CD4-positive, alpha-beta memory T cell (primary cell): ENCODE measurements at regions of chr13 and their contacts with region 1.

Region 1: DNA sequence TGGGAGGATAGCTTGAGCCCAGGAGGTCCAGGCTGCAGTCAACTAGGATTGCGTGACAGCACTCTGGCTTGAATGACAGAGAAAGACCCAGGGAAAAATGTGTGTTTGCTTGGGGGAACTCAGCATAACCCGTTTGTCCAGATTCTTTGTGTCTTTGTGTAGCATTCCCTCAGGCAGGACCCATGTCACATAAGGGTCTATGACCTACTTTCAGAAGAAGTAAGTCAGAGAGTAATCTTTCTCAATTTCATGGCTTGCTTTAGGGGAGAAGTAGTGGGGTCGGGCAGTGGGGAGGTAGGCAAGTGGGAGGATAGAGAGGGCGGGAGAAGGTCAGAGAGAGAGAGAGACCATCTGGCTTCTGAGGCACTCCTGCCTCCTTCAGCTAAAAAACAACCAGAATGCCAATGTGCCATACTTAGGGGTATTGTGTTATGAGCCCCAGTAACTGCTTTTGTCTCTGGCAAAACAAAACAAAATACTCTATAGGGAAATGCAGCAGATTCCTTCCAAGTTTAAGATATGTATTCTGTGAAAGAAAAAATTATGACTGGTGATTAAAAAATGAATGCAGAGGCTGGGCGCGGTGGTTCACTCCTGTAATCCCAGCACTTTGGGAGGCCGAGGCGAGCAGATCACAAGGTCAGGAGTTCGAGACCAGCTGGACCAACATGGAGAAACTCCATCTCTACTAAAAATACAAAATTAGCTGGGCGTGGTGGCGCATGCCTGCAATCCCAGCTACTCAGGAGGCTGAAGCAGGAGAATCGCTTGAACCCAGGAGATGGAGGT is 12.1 kb upstream of the PSPC1 start:
- DNase-seq: no peak
- H3K4me3 ChIP-seq: no peak overlapping the region
- H3K4me3 Mint-ChIP-seq: no peak overlapping the region
- H3K27ac ChIP-seq: no peak overlapping the region
- H3K27ac Mint-ChIP-seq: peak overlapping the region in 1 of 7 donors; percentile 18
- H3K4me1 ChIP-seq: no peaks in the 10 kb centered on the region
- H3K4me1 Mint-ChIP-seq: no peaks in the 10 kb centered on the region
- H3K27me3 ChIP-seq: no peaks in the 10 kb centered on the region
- H3K27me3 Mint-ChIP-seq: no peaks in the 10 kb centered on the region

Region 2: DNA sequence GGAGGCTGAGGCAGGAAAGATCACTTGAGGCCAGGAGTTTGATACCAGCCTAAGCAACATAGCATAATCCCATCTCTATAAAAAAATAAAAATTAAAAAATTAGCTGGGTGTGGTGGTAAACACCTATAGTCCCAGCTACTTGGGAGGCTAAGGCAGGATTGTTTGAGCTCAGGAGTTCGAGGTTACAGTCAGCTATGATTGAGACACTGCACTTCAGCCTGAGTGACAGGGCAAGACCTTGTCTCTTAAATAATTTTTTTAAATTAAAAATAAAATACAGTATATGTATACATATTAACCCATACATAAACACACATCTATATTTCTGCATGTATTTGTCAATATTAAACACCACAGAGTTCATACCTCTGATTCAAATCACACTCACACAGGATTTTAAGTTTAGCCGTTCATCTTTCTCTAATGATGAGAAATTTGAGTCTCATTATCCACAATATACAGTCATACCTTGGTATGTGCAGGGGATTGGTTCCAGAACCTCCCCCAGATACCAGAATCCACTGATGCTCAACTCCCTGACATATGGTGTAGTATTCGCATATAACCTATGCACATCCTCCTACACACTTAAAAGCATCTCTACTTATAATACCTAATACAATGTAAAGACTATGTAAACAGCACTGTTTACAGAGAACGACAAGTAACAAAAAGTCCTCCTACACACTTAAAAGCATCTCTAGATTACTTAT is 56.8 kb before region 1 on chr13:
- CTCF ChIA-PET with region 1: no interaction called
- POLR2A ChIA-PET with region 1: interaction called, 3 read pairs
- intact Hi-C with region 1: loop called (anchors 10 kb)
- DNase-seq: no peak
- H3K4me3 ChIP-seq: no peak overlapping the region
- H3K4me3 Mint-ChIP-seq: no peak overlapping the region
- H3K27ac ChIP-seq: no peak overlapping the region
- H3K27ac Mint-ChIP-seq: peak overlapping the region in 4 of 7 donors; percentile 35 to 81 (median 61)
- H3K4me1 ChIP-seq: no peaks in the 10 kb centered on the region
- H3K4me1 Mint-ChIP-seq: peaks cover 13 to 31% (median 17%) of the 10 kb centered on the region in 4 donors
- H3K27me3 ChIP-seq: no peaks in the 10 kb centered on the region
- H3K27me3 Mint-ChIP-seq: no peaks in the 10 kb centered on the region